B cell (primary cell): ENCODE measurements at regions of chr3 and their contacts with region 1.

Region 1: GRCh38 chr3:4978204-4978965 is 852 bp upstream of the BHLHE40 start:
- DNase-seq: peak; percentile 91
- ATAC-seq: peak; percentile 48
- H3K4me3 ChIP-seq: peak overlapping the region; percentile 73 to 91 (median 85)
- H3K4me3 Mint-ChIP-seq: peak overlapping the region; percentile 98
- H3K27ac ChIP-seq: peak overlapping the region; percentile 97 to 99
- H3K27ac Mint-ChIP-seq: peak overlapping the region; percentile 96
- H3K4me1 ChIP-seq: peaks cover 52 to 58% of the 10 kb centered on the region in 2 donors
- H3K4me1 Mint-ChIP-seq: peaks cover 62% of the 10 kb centered on the region
- H3K27me3 ChIP-seq: no peaks in the 10 kb centered on the region
- H3K27me3 Mint-ChIP-seq: no peaks in the 10 kb centered on the region
- CTCF ChIP-seq: no peak

Region 2: GRCh38 chr3:4831580-4831950 is 146.8 kb before region 1 on chr3:
- CTCF ChIA-PET with region 1: interaction called, 5 read pairs
- POLR2A ChIA-PET with region 1: interaction called, 7 read pairs
- intact Hi-C with region 1: loop called (anchors 1 kb)
- DNase-seq: no peak
- ATAC-seq: peak; percentile 11
- H3K4me3 ChIP-seq: peak overlapping the region in 1 of 5 experiments; percentile 54
- H3K4me3 Mint-ChIP-seq: peak overlapping the region; percentile 75
- H3K27ac ChIP-seq: peak overlapping the region in 1 of 2 donors; percentile 64
- H3K27ac Mint-ChIP-seq: peak overlapping the region; percentile 80
- H3K4me1 ChIP-seq: peaks cover 36 to 46% of the 10 kb centered on the region in 2 donors
- H3K4me1 Mint-ChIP-seq: peaks cover 62% of the 10 kb centered on the region
- H3K27me3 ChIP-seq: no peaks in the 10 kb centered on the region
- H3K27me3 Mint-ChIP-seq: no peaks in the 10 kb centered on the region
- CTCF ChIP-seq: no peak

Region 3: DNA sequence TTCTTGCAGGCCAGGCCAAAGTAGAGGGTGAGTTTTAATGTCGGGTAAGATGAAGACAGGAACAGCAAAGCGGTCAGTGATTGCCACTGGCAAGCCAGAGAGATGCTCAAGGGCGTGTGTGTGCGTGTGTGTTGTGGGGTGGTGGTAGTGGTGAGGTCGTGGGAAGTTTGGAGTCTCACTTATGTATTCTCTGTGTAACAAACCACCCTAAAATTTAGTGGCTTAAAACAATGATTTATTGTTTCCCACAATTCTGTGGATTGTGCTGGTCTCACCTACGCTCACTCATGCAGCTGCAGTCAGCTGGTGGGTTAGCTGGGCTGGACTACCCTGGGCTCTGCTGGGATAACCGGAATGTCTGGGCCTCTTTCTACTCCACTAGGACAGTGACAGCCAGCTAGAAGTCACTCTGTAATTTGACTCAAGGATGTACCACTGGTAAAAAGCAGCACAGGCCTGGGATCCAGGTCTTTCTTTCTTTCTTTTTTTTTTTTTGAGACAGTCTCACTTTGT is 50.1 kb before region 1 on chr3:
- CTCF ChIA-PET with region 1: interaction called, 3 read pairs
- POLR2A ChIA-PET with region 1: no interaction called
- intact Hi-C with region 1: loop called (anchors 10 kb)
- DNase-seq: no peak
- ATAC-seq: no peak
- H3K4me3 ChIP-seq: no peak overlapping the region
- H3K4me3 Mint-ChIP-seq: no peak overlapping the region
- H3K27ac ChIP-seq: no peak overlapping the region
- H3K27ac Mint-ChIP-seq: no peak overlapping the region
- H3K4me1 ChIP-seq: peaks cover 0 to 5% of the 10 kb centered on the region in 2 donors
- H3K4me1 Mint-ChIP-seq: peaks cover 9% of the 10 kb centered on the region
- H3K27me3 ChIP-seq: no peaks in the 10 kb centered on the region
- H3K27me3 Mint-ChIP-seq: no peaks in the 10 kb centered on the region
- CTCF ChIP-seq: no peak

Region 4: GRCh38 chr3:4994823-4995499 is 16.6 kb after region 1 on chr3:
- CTCF ChIA-PET with region 1: interaction called, 39 read pairs
- POLR2A ChIA-PET with region 1: interaction called, 3 read pairs
- intact Hi-C with region 1: no loop called
- DNase-seq: no peak
- ATAC-seq: no peak
- H3K4me3 ChIP-seq: no peak overlapping the region
- H3K4me3 Mint-ChIP-seq: no peak overlapping the region
- H3K27ac ChIP-seq: no peak overlapping the region
- H3K27ac Mint-ChIP-seq: peak overlapping the region; percentile 3
- H3K4me1 ChIP-seq: peaks cover 0 to 6% of the 10 kb centered on the region in 2 donors
- H3K4me1 Mint-ChIP-seq: peaks cover 15% of the 10 kb centered on the region
- H3K27me3 ChIP-seq: no peaks in the 10 kb centered on the region
- H3K27me3 Mint-ChIP-seq: no peaks in the 10 kb centered on the region
- CTCF ChIP-seq: no peak

Region 5: GRCh38 chr3:5016218-5017161 is 38.1 kb after region 1 on chr3:
- CTCF ChIA-PET with region 1: interaction called, 77 read pairs
- POLR2A ChIA-PET with region 1: interaction called, 117 read pairs
- intact Hi-C with region 1: loop called (anchors 1 kb)
- DNase-seq: peak; percentile 73
- ATAC-seq: peak; percentile 22
- H3K4me3 ChIP-seq: peak overlapping the region in 1 of 5 experiments; percentile 25
- H3K4me3 Mint-ChIP-seq: peak overlapping the region; percentile 43
- H3K27ac ChIP-seq: peak overlapping the region; percentile 61 to 86
- H3K27ac Mint-ChIP-seq: peak overlapping the region; percentile 86
- H3K4me1 ChIP-seq: peaks cover 61 to 82% of the 10 kb centered on the region in 2 donors
- H3K4me1 Mint-ChIP-seq: peaks cover 78% of the 10 kb centered on the region
- H3K27me3 ChIP-seq: no peaks in the 10 kb centered on the region
- H3K27me3 Mint-ChIP-seq: no peaks in the 10 kb centered on the region
- CTCF ChIP-seq: no peak

Region 6: DNA sequence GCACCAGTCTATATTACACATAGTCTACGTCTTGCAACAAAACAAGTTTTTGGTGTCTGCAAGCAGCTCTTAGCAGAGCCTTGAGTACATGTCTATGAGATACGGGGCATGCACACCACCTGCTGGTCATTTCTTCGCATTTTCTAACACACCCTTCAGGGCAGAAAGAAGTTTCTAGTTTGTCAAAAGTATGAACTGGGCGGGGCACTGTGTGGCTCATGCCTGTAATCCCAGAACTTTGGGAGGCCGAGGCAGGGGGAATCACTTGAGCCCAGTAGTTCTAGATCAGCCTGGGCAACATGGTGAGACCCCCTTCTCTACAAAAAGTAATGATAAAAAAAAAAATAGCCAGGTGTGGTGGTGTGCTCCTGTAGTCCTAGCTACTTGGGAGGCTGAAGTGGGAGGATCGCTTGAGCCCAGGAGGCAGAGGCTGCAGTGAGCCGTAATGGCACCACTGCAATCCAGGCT is 79.5 kb after region 1 on chr3:
- CTCF ChIA-PET with region 1: interaction called, 6 read pairs
- POLR2A ChIA-PET with region 1: interaction called, 6 read pairs
- intact Hi-C with region 1: loop called (anchors 2 kb)
- DNase-seq: peak; percentile 86
- ATAC-seq: peak; percentile 89
- H3K4me3 ChIP-seq: no peak overlapping the region
- H3K4me3 Mint-ChIP-seq: no peak overlapping the region
- H3K27ac ChIP-seq: no peak overlapping the region
- H3K27ac Mint-ChIP-seq: no peak overlapping the region
- H3K4me1 ChIP-seq: peaks cover 37 to 44% of the 10 kb centered on the region in 2 donors
- H3K4me1 Mint-ChIP-seq: peaks cover 36% of the 10 kb centered on the region
- H3K27me3 ChIP-seq: peaks cover 0 to 4% (median 0%) of the 10 kb centered on the region in 4 experiments
- H3K27me3 Mint-ChIP-seq: peaks cover 7% of the 10 kb centered on the region
- CTCF ChIP-seq: peak; percentile 82

Region 7: DNA sequence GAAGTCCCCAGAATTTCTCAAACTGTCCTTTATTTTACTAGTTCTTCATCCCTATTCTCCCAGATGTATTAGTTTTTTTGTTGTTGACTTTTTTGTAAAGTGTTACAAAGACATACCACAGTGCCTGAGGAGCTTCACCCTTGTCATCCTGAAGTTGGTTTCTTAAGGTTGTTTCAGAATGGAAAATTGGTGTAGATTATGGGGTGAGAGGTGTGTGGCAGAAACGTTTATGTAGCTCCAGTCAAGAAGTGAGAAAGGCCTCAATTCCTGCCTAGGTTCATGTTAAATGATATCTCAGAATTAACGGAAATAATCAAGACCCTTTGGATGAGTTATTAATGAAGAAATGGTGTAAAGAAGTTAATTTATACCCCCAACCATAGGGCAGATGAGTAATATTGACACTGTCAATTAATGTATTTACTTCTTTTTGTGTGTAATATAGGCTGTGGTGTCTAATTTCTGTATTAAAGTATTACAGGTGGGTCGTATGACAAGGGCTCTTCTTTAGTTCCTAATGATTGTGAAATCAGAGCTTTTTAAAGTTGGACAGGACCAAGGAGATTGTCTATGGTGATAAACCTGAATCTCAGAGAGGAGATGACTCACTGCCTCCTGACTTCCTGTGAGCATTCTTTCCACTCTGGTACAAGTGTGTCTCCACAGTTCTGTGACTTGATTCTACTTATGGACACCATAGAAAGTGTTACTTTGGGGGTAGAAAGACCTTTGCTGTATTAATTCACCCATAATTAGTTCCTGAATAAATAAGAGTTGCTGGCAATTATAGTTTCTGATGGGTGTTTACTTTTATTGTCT is 216.2 kb after region 1 on chr3:
- CTCF ChIA-PET with region 1: no interaction called
- POLR2A ChIA-PET with region 1: interaction called, 6 read pairs
- intact Hi-C with region 1: loop called (anchors 5 kb)
- DNase-seq: peak; percentile 48
- ATAC-seq: peak; percentile 56
- H3K4me3 ChIP-seq: no peak overlapping the region
- H3K4me3 Mint-ChIP-seq: peak overlapping the region; percentile 66
- H3K27ac ChIP-seq: peak overlapping the region; percentile 81 to 97
- H3K27ac Mint-ChIP-seq: peak overlapping the region; percentile 82
- H3K4me1 ChIP-seq: peaks cover 86 to 91% of the 10 kb centered on the region in 2 donors
- H3K4me1 Mint-ChIP-seq: peaks cover 87% of the 10 kb centered on the region
- H3K27me3 ChIP-seq: no peaks in the 10 kb centered on the region
- H3K27me3 Mint-ChIP-seq: no peaks in the 10 kb centered on the region
- CTCF ChIP-seq: no peak